ENCODE measurements at regions of chr3 and their contacts with region 1.

Region 1: GRCh38 chr3:139389458-139390209 is at the start of gene COPB2:
- DNase-seq: peak; percentile 100
- total RNA-seq, gene COPB2: 87.0 TPM

Region 2: DNA sequence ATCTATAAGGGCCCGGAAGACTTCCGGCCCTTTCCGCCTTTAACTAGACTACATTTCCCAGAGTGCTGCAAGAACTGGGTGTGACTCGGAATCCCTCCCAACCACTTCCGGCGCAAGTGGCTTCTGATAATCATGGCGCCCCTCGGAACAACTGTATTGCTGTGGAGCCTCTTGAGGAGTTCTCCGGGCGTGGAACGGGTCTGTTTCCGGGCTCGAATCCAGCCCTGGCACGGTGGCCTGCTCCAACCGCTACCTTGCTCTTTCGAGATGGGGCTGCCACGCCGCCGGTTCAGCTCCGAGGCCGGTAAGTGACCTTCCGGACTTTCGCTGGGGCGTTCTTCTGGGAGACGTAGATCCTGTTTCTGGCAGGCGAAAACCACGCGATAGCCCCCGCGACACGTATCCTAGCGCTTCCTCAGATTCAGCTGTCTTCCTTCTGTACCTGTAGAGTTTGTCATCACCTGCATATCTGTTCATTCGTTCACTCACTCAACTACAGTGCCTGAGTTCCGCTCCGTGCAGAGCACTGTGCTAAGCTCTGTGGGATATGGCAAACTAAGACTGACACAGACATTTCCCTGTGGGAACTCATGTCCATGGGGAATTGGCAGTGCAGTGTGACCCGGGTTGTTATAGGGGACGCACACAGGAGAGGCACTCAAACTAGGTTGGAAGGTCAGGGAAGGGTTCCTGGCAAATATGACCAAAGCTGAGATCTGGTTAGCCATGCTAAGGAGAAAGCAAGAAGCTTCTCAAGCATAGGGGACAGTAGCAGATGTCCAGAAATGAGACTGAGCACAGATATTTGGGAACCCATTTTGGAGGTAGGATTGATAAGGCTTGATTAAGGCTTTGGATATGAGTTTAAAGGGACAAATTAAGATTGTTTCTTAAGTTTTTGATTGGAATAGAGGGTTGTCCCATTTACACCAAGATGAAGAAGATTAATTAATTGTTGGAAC is 45.5 kb before region 1 on chr3 and contains the start of gene MRPS22:
- intact Hi-C with region 1: loop called (anchors 2 kb)
- DNase-seq: peak; percentile 86
- total RNA-seq, gene MRPS22: 67.6 TPM